Esophagus muscularis mucosa (tissue), 4 donors: ENCODE measurements at regions of chr16 and their contacts with region 1.

Region 1: DNA sequence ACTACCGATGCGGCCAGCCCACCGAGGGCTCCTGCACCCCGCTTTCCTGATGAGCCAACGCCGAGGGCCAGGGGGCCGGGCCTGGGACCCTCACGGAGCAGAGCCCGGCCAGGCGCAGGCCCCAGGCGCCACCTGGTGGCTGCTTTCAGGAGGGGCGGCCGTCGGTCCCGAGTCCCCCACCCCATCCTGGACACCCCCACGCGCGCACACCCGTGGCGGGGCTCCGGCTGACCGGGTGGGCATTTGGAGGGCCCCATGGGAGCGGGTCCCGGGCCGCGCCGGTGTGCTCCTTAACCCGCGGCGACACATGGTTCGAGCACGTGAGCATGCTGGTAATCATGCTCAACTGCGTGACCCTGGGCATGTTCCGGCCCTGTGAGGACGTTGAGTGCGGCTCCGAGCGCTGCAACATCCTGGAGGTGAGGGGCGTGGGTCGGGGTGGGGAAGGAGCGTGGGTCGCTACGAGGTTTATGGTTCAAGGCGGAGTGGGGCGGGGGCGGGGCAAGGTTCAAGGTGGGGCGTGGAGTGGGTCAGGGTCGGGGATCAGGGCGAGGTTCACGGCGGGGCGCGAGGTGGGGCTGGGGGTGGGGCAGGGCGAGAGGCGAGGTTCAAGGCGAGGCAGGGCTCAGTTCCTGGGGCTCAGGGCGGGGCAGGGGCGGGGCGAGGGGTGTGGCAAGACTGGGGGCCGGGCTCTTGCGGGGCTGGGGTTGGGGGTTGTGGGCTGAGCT is 30.2 kb downstream of the TPSG1 start:
- DNase-seq: no peak
- H3K4me3 ChIP-seq: peak overlapping the region in 1 of 4 donors; percentile 7
- H3K27ac ChIP-seq: peak overlapping the region; percentile 77 to 88 (median 83)
- H3K4me1 ChIP-seq: peaks cover 0 to 73% (median 64%) of the 10 kb centered on the region in 4 donors
- H3K27me3 ChIP-seq: peaks cover 0 to 3% (median 0%) of the 10 kb centered on the region in 4 donors
- CTCF ChIP-seq: peak; percentile 86 to 92 (median 87)
- EP300 ChIP-seq: no peak
- POLR2A ChIP-seq: no peak

Region 2: GRCh38 chr16:1105888-1106620 is 88.8 kb before region 1 on chr16:
- intact Hi-C with region 1: loop called (anchors 2 kb)
- DNase-seq: no peak
- H3K4me3 ChIP-seq: no peak overlapping the region
- H3K27ac ChIP-seq: no peak overlapping the region
- H3K4me1 ChIP-seq: peaks cover 6 to 33% (median 28%) of the 10 kb centered on the region in 4 donors
- H3K27me3 ChIP-seq: peaks cover 0 to 82% (median 6%) of the 10 kb centered on the region in 4 donors
- CTCF ChIP-seq: peak; percentile 91 to 99 (median 95)
- EP300 ChIP-seq: no peak
- POLR2A ChIP-seq: no peak

Region 3: GRCh38 chr16:1152651-1153259 is 42.1 kb before region 1 on chr16 and contains the start of gene CACNA1H:
- intact Hi-C with region 1: loop called (anchors 5 kb)
- DNase-seq: no peak
- H3K4me3 ChIP-seq: peak within 1 kb of the TSS; percentile 67 to 86 (median 75)
- H3K27ac ChIP-seq: peak within 1 kb of the TSS; percentile 92 to 98 (median 95)
- H3K4me1 ChIP-seq: peaks cover 18 to 63% (median 60%) of the 10 kb centered on the region in 4 donors
- H3K27me3 ChIP-seq: peaks cover 0 to 57% (median 0%) of the 10 kb centered on the region in 4 donors
- CTCF ChIP-seq: peak in 2 of 3 experiments; percentile 39 to 64
- EP300 ChIP-seq: no peak
- POLR2A ChIP-seq: no peak
- total RNA-seq, gene CACNA1H: 225 to 361 (median 259) TPM

Region 4: GRCh38 chr16:1244881-1245280 is 50.1 kb after region 1 on chr16:
- intact Hi-C with region 1: no loop called
- DNase-seq: no peak
- H3K4me3 ChIP-seq: no peak overlapping the region
- H3K27ac ChIP-seq: no peak overlapping the region
- H3K4me1 ChIP-seq: peaks cover 0 to 4% (median 2%) of the 10 kb centered on the region in 4 donors
- H3K27me3 ChIP-seq: peaks cover 0 to 51% (median 0%) of the 10 kb centered on the region in 4 donors
- CTCF ChIP-seq: no peak
- EP300 ChIP-seq: no peak
- POLR2A ChIP-seq: no peak